Posterior cingulate gyrus (tissue), 11 donors: ENCODE measurements at regions of chr11 and their contacts with region 1.

Region 1: DNA sequence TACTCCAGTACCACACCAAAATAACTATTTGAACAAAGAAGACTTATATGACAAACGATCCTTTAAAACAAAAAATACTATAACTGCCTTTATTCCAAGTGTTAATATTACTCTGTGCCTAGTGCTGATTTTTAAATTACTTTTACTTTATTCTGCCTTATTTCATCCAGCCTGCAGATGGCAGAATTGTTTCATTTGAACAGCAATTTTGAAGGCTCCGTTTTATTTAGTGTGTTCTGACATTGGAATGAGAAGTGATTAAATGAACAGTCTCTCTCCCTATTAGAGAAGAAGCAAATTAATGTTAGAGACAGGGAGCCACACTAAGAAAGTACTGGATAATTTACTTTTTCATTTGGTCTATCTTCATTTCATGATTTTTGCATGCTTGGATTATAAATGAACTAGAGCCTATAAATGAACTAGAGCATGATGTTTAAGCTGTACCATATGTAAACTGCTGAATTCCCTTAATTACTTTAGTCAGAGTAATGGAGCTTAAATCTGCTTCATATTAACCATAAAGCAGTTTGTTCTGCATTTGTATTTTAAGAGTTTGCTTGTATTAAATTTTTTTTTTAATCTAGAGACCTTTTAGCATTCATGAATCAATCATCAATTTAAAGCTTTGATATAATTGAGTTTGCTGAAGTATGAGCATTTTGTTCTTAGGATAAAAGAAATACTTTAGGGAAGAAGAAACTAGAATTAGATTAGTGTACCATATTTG is 9.8 kb downstream of the PDHX start:
- DNase-seq: no peak

Region 2: DNA sequence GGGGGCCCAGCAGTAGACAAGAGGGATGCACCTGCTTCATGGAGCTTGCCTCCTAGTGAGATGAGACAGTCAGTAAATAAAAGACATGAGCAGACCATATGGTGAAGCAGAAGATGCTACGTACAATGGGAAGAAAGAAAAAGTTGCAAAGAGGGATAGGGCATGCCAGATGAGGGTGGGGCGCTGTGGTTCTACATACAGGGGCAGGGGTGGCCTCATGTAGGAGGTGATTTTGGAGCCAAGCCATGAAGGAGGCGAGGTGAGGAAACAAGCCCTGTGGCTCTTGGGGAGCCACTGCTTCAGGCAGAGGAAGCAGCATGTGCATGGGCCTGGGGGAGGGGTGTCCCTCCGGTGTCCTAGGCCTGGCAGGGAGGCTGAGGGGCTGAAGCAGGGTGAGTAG is 805.6 kb before region 1 on chr11:
- intact Hi-C with region 1: no loop called
- DNase-seq: no peak

Region 3: GRCh38 chr11:34997952-34998528 is 71.8 kb after region 1 on chr11:
- intact Hi-C with region 1: no loop called
- DNase-seq: no peak

Region 4: DNA sequence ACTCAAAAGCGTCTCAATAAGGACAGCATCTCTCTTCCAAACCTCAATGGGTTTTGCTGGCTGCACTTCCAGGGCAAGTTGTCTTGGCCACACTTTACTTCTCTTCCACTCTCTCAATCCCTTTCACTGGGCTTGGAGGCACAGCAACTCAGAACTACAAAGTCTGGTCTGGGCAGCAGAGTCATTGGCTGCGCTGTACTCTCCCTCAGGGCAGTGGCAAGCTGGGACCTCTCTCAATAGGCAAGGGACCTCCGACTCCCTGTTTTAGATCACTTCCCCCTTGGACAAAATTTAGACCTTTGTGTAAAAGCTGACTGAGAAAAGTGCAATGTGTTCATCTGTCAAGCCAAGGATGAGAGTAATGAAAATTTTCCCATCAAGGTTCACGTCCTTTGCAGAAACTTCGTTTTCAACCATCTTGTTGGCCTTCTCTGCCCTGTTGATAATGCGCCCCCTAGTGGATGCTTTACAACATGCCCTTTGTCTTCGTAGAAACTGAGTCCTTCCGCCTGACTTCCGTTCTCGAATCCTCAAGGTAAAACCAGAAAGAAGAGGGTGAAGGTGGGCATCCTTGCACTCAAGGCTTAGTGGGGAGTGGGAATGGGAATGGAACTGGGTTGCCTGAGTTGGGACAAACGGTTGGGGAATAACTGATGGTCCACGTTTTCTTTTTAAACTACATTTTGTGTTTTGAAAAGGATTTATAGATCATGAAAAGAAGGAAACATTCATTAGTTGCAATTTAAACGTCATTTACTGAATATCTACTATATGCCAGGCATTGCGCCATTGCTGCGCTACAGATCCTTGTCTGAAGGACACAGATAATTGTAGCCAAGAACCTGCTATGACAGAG is 311.8 kb after region 1 on chr11:
- intact Hi-C with region 1: loop called (anchors 2 kb)
- DNase-seq: peak in 3 of 10 donors; percentile 22 to 53 (median 25)

Region 5: GRCh38 chr11:35391922-35392813 is 465.9 kb after region 1 on chr11:
- intact Hi-C with region 1: loop called (anchors 1 kb)
- DNase-seq: peak; percentile 59 to 97 (median 83)

Region 6: GRCh38 chr11:35485656-35486322 is 559.5 kb after region 1 on chr11:
- intact Hi-C with region 1: loop called (anchors 5 kb)
- DNase-seq: peak; percentile 70 to 96 (median 84)